IMR-90 (cell line): ENCODE measurements at regions of chr12 and their contacts with region 1.

Region 1: DNA sequence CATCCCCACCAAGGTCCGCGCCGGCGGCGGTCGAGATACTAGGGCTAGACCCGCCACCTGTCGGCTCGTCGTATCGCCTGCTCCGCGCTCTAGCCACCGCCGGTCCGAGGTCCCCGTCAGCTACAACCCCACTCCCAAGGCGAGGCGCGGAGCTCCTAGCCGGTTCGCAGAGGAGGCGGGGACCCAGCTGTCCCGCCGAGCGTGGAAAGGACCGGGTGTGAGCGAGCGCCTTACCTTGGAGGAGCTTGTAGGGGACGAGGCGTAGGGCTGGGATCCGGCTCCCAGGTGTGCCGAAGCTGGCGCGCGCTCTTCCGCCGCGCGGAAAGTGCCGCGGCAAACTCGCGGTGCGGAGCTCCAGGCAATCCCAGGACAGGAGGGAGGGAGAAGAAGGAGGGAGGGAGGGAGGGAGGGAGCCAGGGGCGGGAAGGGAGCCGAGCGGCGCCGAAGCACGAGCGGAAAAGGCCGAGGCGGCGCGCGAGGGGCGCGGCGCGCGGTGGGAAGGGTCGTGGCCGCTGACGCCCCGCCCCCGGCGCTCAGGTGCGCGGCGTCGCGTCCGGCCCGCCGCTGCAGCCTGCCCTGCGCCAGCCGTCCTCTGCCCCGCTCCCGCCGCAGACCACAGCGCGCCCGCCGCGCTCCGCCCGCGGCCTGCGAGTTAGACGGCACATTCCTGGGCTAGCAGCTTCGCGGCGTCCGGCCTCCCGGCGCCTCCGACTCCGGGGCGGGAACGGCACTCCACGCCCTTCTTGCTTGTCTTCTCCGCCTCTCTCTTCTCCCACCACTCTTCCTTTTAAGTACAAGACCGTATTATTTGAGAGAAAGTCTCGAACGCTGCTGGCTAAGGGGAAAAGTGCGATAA is at the start of gene PAWR:
- DNase-seq: peak; percentile 93
- ATAC-seq: peak; percentile 60
- H3K4me3 ChIP-seq: peak within 1 kb of the TSS; percentile 96
- H3K27ac ChIP-seq: peak within 1 kb of the TSS; percentile 79
- H3K4me1 ChIP-seq: peaks cover 12% of the 10 kb centered on the region; the same call in 1 of the 2 replicates
- H3K27me3 ChIP-seq: no peaks in the 10 kb centered on the region
- CTCF ChIP-seq: peak; percentile 30
- POLR2A ChIP-seq: peak; percentile 80
- RAD21 ChIP-seq: no peak
- total RNA-seq, gene PAWR: 13.6 and 34.4 TPM in 2 replicates

Region 2: GRCh38 chr12:79300166-79300501 is 390.7 kb before region 1 on chr12:
- CTCF ChIA-PET with region 1: no interaction called
- POLR2A ChIA-PET with region 1: no interaction called
- dilution Hi-C with region 1: no loop called
- in situ Hi-C with region 1: no loop called
- intact Hi-C with region 1: loop called (anchors 5 kb)
- DNase-seq: peak; percentile 91
- ATAC-seq: peak; percentile 90
- H3K4me3 ChIP-seq: no peak overlapping the region
- H3K27ac ChIP-seq: peak overlapping the region; percentile 41; the same call in 1 of the 2 replicates
- H3K4me1 ChIP-seq: 0 out of 2 replicates have a peak, but pooled peaks cover 1% of the 10 kb centered on the region
- H3K27me3 ChIP-seq: no peaks in the 10 kb centered on the region
- CTCF ChIP-seq: no peak
- POLR2A ChIP-seq: no peak
- RAD21 ChIP-seq: no peak

Region 3: GRCh38 chr12:79587368-79587767 is 103.5 kb before region 1 on chr12:
- CTCF ChIA-PET with region 1: no interaction called
- POLR2A ChIA-PET with region 1: no interaction called
- dilution Hi-C with region 1: no loop called
- in situ Hi-C with region 1: no loop called
- intact Hi-C with region 1: loop called (anchors 10 kb)
- DNase-seq: no peak
- ATAC-seq: no peak
- H3K4me3 ChIP-seq: no peak overlapping the region
- H3K27ac ChIP-seq: no peak overlapping the region
- H3K4me1 ChIP-seq: peaks cover 1% of the 10 kb centered on the region; the same call in 1 of the 2 replicates
- H3K27me3 ChIP-seq: no peaks in the 10 kb centered on the region
- CTCF ChIP-seq: no peak
- POLR2A ChIP-seq: no peak
- RAD21 ChIP-seq: no peak

Region 4: GRCh38 chr12:79624378-79624777 is 66.5 kb before region 1 on chr12:
- CTCF ChIA-PET with region 1: no interaction called
- POLR2A ChIA-PET with region 1: no interaction called
- dilution Hi-C with region 1: no loop called
- in situ Hi-C with region 1: no loop called
- intact Hi-C with region 1: loop called (anchors 5 kb)
- DNase-seq: peak; percentile 81
- ATAC-seq: peak; percentile 81
- H3K4me3 ChIP-seq: no peak overlapping the region
- H3K27ac ChIP-seq: no peak overlapping the region
- H3K4me1 ChIP-seq: no peaks in the 10 kb centered on the region
- H3K27me3 ChIP-seq: no peaks in the 10 kb centered on the region
- CTCF ChIP-seq: no peak
- POLR2A ChIP-seq: no peak
- RAD21 ChIP-seq: no peak

Region 5: DNA sequence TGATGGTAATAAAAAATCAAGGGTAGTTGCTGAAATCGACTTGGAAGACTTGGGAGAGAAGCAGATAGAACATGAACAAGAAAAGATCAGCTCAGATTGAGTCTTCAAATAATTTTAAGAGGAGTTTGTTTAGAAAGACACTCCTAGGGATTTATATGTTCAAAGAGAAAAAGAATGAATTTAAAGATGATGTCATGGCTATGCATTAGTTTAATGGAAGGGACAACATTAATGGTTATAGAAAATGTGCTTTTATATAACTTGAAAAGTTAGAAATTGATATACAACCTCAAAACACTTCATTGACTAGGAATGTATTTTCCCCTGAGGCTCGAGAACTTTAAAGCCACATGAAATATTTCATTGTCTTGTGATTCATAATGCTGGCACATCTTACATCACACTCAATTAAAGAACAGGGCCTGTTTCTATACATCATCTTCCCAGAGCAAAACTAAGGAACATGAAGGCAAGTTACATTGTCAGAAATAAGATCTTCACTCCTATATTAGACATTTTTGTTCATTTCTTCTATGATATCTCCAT is 35.0 kb after region 1 on chr12:
- CTCF ChIA-PET with region 1: no interaction called
- POLR2A ChIA-PET with region 1: no interaction called
- dilution Hi-C with region 1: no loop called
- in situ Hi-C with region 1: no loop called
- intact Hi-C with region 1: no loop called
- DNase-seq: peak; percentile 84
- ATAC-seq: peak; percentile 53
- H3K4me3 ChIP-seq: no peak overlapping the region
- H3K27ac ChIP-seq: no peak overlapping the region
- H3K4me1 ChIP-seq: no peaks in the 10 kb centered on the region; the same call in 1 of the 2 replicates
- H3K27me3 ChIP-seq: no peaks in the 10 kb centered on the region
- CTCF ChIP-seq: no peak
- POLR2A ChIP-seq: no peak
- RAD21 ChIP-seq: no peak

Region 6: DNA sequence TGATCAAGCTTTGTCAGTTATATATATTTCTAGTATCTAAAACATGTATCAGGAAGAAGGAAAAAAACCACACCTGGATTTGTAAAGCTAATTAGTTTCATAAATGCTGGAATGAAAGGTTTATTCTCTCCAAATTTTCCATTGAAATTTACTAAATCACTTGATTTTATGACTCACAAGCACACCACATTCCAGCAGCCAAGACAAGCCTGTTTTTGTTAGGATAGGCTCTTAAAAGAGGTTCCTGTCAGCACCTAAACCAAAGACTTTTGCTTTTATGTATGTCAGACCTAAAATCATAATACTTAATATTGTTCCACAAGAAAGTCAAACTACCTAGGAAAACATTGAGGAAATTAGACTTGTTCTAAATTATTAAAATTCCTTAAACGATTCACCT is 85.2 kb after region 1 on chr12:
- CTCF ChIA-PET with region 1: no interaction called
- POLR2A ChIA-PET with region 1: no interaction called
- dilution Hi-C with region 1: no loop called
- in situ Hi-C with region 1: no loop called
- intact Hi-C with region 1: loop called (anchors 5 kb)
- DNase-seq: peak; percentile 68
- ATAC-seq: peak; percentile 63
- H3K4me3 ChIP-seq: no peak overlapping the region
- H3K27ac ChIP-seq: no peak overlapping the region
- H3K4me1 ChIP-seq: no peaks in the 10 kb centered on the region
- H3K27me3 ChIP-seq: no peaks in the 10 kb centered on the region
- CTCF ChIP-seq: no peak
- POLR2A ChIP-seq: no peak
- RAD21 ChIP-seq: no peak

Region 7: DNA sequence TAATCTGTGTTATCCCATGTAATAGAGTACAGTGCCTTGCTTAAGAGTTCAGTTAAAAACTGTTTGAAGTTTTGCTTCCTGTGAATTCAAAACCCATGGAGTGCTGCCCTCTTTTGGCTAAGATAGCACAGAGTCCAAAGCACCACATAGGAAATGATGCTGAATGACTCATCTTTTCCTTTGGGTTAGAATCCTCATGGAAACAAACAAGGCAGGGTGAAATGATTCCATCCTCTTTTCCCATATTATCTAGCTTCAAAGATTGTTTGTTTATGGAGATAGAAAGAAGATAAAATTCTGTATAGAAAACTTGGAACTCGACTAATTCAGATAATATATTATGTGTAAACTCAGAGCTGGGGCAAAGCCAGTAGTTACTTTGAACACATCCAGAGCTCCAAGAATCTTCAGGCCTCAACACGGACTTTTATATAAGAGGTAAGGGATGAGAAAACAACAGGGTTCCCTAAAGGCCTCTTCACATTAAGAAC is 495.9 kb after region 1 on chr12:
- CTCF ChIA-PET with region 1: no interaction called
- POLR2A ChIA-PET with region 1: no interaction called
- dilution Hi-C with region 1: no loop called
- in situ Hi-C with region 1: no loop called
- intact Hi-C with region 1: loop called (anchors 1 kb)
- DNase-seq: peak; percentile 97
- ATAC-seq: peak; percentile 86
- H3K4me3 ChIP-seq: no peak overlapping the region
- H3K27ac ChIP-seq: peak overlapping the region; percentile 77
- H3K4me1 ChIP-seq: peaks cover 17% of the 10 kb centered on the region
- H3K27me3 ChIP-seq: no peaks in the 10 kb centered on the region
- CTCF ChIP-seq: peak; percentile 93
- POLR2A ChIP-seq: peak; percentile 55; the same call in 1 of the 2 replicates
- RAD21 ChIP-seq: peak; percentile 92